Dorsolateral prefrontal cortex (tissue), 120 donors: ENCODE measurements at regions of chr9 and their contacts with region 1.

Region 1: GRCh38 chr9:34376596-34377403 is at the start of gene MYORG:
- DNase-seq: peak; percentile 82 to 95 (median 93)
- H3K4me3 ChIP-seq: peak within 1 kb of the TSS; percentile 57 to 91 (median 80)
- H3K27ac ChIP-seq: peak within 1 kb of the TSS; percentile 26 to 92 (median 83)
- H3K27me3 ChIP-seq: no peaks in the 10 kb centered on the region
- CTCF ChIP-seq: peak in 20 of 56 donors; percentile 6 to 47 (median 18)
- total RNA-seq, gene MYORG: 13.4 to 79.3 (median 30.2) TPM

Region 2: GRCh38 chr9:33942471-33943083 is 434.2 kb before region 1 on chr9:
- intact Hi-C with region 1: no loop called
- DNase-seq: no peak
- H3K4me3 ChIP-seq: no peak overlapping the region
- H3K27ac ChIP-seq: peak overlapping the region in 2 of 59 donors; percentile 1 to 47
- H3K27me3 ChIP-seq: no peaks in the 10 kb centered on the region
- CTCF ChIP-seq: no peak

Region 3: GRCh38 chr9:34328987-34329832 is 47.6 kb before region 1 on chr9 and contains the starts of genes KIF24 and NUDT2:
- intact Hi-C with region 1: loop called (anchors 1 kb)
- DNase-seq: peak; percentile 95 to 99 (median 98)
- H3K4me3 ChIP-seq: peak within 1 kb of the TSS; percentile 60 to 99 (median 85)
- H3K27ac ChIP-seq: peak within 1 kb of the TSS; percentile 80 to 98 (median 93)
- H3K27me3 ChIP-seq: no peaks in the 10 kb centered on the region
- CTCF ChIP-seq: peak in 29 of 56 donors; percentile 4 to 51 (median 19)
- total RNA-seq, gene KIF24: 0.61 to 3.8 (median 1.6) TPM
- total RNA-seq, gene NUDT2: 9.9 to 32.0 (median 20.6) TPM

Region 4: DNA sequence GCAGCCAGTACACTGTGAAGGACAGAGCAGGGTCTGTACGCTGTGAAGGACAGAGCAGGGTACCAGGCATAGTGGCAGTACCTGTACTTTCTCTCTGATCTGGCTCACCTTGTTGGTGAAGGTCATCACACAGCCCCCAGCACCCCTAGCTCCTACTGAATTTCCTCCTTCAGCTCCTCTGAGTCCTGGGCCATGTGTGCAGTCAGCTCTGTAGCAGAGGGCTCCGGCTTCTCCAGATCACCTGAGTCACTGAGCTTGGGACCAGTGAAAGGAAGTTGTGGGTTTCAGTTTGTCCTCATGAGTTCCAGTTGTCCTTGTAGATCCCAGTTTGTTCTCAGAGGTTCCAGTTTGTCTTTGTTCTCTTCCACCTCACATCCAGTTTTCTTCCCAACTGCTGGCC is 41.9 kb before region 1 on chr9:
- intact Hi-C with region 1: loop called (anchors 1 kb)
- DNase-seq: no peak
- H3K4me3 ChIP-seq: peak overlapping the region in 29 of 59 donors; percentile 1 to 49 (median 24)
- H3K27ac ChIP-seq: peak overlapping the region; percentile 37 to 98 (median 91)
- H3K27me3 ChIP-seq: no peaks in the 10 kb centered on the region
- CTCF ChIP-seq: no peak